Activated CD4-positive, alpha-beta T cell treated with anti-CD3 and anti-CD28 coated beads for 36 hours (primary cell): ENCODE measurements at regions of chr16 and their contacts with region 1.

Region 1: GRCh38 chr16:3059000-3059722 is 6.3 kb upstream of the IL32 start:
- DNase-seq: peak; percentile 93
- ATAC-seq: peak; percentile 83
- H3K4me3 Mint-ChIP-seq: peak overlapping the region; percentile 84
- H3K27ac Mint-ChIP-seq: peak overlapping the region; percentile 93
- H3K4me1 Mint-ChIP-seq: peaks cover 62% of the 10 kb centered on the region
- H3K27me3 Mint-ChIP-seq: no peaks in the 10 kb centered on the region

Region 2: DNA sequence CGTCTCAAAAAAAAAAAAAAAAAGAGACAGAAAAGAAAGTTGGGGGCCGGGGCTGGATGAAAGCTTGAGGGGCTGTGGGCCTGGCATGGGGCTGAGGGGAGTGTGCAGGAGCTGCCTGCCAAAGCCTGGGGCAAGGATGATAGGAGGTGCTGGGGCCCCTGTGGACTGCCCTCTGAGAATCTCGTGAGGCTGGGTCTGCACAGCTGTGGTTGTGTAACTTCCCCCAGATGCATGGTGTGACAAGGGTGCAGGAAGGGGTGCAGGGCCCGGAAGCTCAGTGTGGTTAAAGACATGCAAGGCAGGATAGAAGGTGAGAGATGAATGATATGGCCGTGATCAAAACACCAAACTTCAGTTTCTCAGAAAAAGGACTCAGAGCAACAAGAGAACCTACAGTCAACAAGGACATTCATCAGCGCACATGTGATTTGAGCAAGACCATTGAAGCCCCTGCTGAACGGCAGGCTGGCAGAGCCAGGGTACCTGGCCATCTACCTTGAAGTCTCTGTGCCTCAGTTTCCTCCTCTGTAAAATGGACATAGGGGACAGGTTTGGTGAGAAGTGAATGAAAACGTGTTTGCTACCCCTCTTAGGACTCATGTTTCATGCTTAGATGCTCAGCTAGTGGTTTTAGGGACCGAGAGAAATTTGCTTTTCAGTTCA is 15.8 kb after region 1 on chr16:
- CTCF ChIA-PET with region 1: interaction called, 13 read pairs
- POLR2A ChIA-PET with region 1: interaction called, 48 read pairs
- intact Hi-C with region 1: no loop called
- DNase-seq: peak; percentile 91
- ATAC-seq: peak; percentile 62
- H3K4me3 Mint-ChIP-seq: peak overlapping the region; percentile 78
- H3K27ac Mint-ChIP-seq: peak overlapping the region; percentile 99
- H3K4me1 Mint-ChIP-seq: peaks cover 90% of the 10 kb centered on the region
- H3K27me3 Mint-ChIP-seq: no peaks in the 10 kb centered on the region

Region 3: GRCh38 chr16:3099732-3100499 is 40.8 kb after region 1 on chr16:
- CTCF ChIA-PET with region 1: interaction called, 7 read pairs
- POLR2A ChIA-PET with region 1: no interaction called
- intact Hi-C with region 1: loop called (anchors 1 to 2 kb)
- DNase-seq: peak; percentile 99
- ATAC-seq: peak; percentile 84
- H3K4me3 Mint-ChIP-seq: peak overlapping the region; percentile 68
- H3K27ac Mint-ChIP-seq: peak overlapping the region; percentile 84
- H3K4me1 Mint-ChIP-seq: peaks cover 49% of the 10 kb centered on the region
- H3K27me3 Mint-ChIP-seq: no peaks in the 10 kb centered on the region

Region 4: GRCh38 chr16:3123986-3124886 is 65.1 kb after region 1 on chr16:
- CTCF ChIA-PET with region 1: interaction called, 83 read pairs
- POLR2A ChIA-PET with region 1: interaction called, 3 read pairs
- intact Hi-C with region 1: loop called (anchors 1 kb)
- DNase-seq: peak; percentile 99
- ATAC-seq: peak; percentile 92
- H3K4me3 Mint-ChIP-seq: peak overlapping the region; percentile 90
- H3K27ac Mint-ChIP-seq: peak overlapping the region; percentile 90
- H3K4me1 Mint-ChIP-seq: peaks cover 30% of the 10 kb centered on the region
- H3K27me3 Mint-ChIP-seq: no peaks in the 10 kb centered on the region

Region 5: GRCh38 chr16:3165111-3165822 is 106.1 kb after region 1 on chr16:
- CTCF ChIA-PET with region 1: interaction called, 18 read pairs
- POLR2A ChIA-PET with region 1: no interaction called
- intact Hi-C with region 1: loop called in 1 of 2 experiments (anchors 1 kb)
- DNase-seq: no peak
- ATAC-seq: no peak
- H3K4me3 Mint-ChIP-seq: peak overlapping the region; percentile 32
- H3K27ac Mint-ChIP-seq: peak overlapping the region; percentile 68
- H3K4me1 Mint-ChIP-seq: peaks cover 10% of the 10 kb centered on the region
- H3K27me3 Mint-ChIP-seq: peaks cover 2% of the 10 kb centered on the region

Region 6: GRCh38 chr16:3194792-3195191 is 135.6 kb after region 1 on chr16:
- CTCF ChIA-PET with region 1: no interaction called
- POLR2A ChIA-PET with region 1: no interaction called
- intact Hi-C with region 1: no loop called
- DNase-seq: no peak
- ATAC-seq: no peak
- H3K4me3 Mint-ChIP-seq: no peak overlapping the region
- H3K27ac Mint-ChIP-seq: no peak overlapping the region
- H3K4me1 Mint-ChIP-seq: peaks cover 21% of the 10 kb centered on the region
- H3K27me3 Mint-ChIP-seq: peaks cover 44% of the 10 kb centered on the region